ENCODE measurements at regions of chr1 and their contacts with region 1.

Region 1: DNA sequence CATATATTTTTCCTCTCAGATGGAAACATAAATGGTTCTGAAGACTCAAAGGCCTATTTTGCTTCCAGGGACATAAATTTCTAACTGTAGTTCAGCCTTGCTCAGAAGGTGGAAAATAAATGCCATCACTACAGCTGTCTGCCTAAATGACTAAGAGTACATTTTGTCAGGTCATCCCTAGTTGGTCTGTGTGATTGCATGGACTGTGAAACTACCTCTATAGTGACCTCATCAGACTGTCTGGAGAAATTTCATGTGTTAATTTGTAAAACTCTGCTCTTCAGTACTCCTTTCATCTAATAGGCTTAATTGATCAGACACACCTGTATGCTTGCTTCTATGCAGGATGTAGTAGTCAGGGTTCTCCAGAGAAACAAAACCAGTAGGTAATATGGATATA is 886.9 kb downstream of the AMY1C start:
- DNase-seq: peak; percentile 42
- H3K4me3 Mint-ChIP-seq: no peak overlapping the region
- H3K27ac Mint-ChIP-seq: no peak overlapping the region
- H3K4me1 Mint-ChIP-seq: no peaks in the 10 kb centered on the region
- H3K27me3 Mint-ChIP-seq: no peaks in the 10 kb centered on the region
- CTCF ChIP-seq: no peak

Region 2: GRCh38 chr1:104120525-104120924 is 516.1 kb before region 1 on chr1:
- CTCF ChIA-PET with region 1: no interaction called
- POLR2A ChIA-PET with region 1: no interaction called
- intact Hi-C with region 1: loop called (anchors 5 kb)
- DNase-seq: no peak
- H3K4me3 Mint-ChIP-seq: no peak overlapping the region
- H3K27ac Mint-ChIP-seq: no peak overlapping the region
- H3K4me1 Mint-ChIP-seq: no peaks in the 10 kb centered on the region
- H3K27me3 Mint-ChIP-seq: peaks cover 26% of the 10 kb centered on the region
- CTCF ChIP-seq: peak; percentile 13

Region 3: DNA sequence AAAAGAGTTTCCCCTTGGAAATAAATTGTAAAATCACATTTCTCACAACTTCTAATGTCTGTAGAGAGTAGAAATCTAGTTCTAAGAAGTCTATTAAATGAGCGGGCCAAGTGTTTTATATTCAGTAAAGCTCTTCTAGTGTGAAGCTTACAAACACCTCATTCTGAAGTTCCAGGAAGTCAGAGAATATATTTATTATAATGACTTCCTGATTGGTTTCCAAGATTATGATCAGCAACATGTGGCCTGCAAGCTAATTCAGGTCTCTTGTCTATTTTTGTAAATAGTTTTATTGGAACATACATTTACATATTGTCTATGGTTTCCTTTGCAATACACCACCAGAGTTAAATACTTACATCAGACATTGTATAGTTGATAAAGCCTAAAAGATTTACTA is 283.0 kb before region 1 on chr1:
- CTCF ChIA-PET with region 1: no interaction called
- POLR2A ChIA-PET with region 1: no interaction called
- intact Hi-C with region 1: no loop called
- DNase-seq: no peak
- H3K4me3 Mint-ChIP-seq: no peak overlapping the region
- H3K27ac Mint-ChIP-seq: no peak overlapping the region
- H3K4me1 Mint-ChIP-seq: no peaks in the 10 kb centered on the region
- H3K27me3 Mint-ChIP-seq: no peaks in the 10 kb centered on the region
- CTCF ChIP-seq: no peak